Activated naive CD4-positive, alpha-beta T cell treated with anti-CD3 and anti-CD28 coated beads for 36 hours (primary cell): ENCODE measurements at regions of chr4 and their contacts with region 1.

Region 1: DNA sequence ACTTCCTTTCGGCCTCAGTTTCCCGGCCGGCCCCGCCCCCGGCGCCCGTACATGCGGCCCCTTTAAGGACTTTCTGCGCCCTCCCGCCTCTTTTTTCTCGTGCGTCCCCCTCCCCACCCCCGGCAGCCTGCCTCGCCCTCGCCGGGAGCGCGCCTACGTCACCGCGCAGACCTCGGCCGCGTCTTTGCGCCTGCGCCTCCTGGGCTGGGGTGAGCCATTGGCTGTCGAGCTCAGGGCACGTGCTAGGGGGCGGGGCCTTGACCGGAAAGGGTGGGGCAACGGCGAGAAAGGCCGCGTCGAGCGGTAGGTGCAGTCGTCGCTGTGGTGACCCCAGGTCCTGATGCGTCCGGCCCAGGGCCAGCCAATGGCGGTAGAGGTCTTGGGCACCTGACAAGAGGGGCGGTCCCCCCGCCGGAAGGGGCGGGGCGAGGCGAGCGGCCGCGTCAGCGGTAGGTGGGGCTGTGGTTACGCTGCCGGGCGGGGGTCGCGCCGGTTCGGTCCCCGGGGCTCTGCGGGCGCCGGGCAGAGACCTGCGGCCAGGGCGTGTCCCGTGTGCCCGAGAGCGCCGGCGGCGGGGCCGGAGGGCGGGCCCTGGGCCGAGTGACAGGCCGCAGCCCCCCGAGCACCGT is at the start of gene UVSSA:
- DNase-seq: peak; percentile 100
- H3K4me3 Mint-ChIP-seq: peak within 1 kb of the TSS; percentile 80
- H3K27ac Mint-ChIP-seq: peak within 1 kb of the TSS; percentile 78
- H3K4me1 Mint-ChIP-seq: peaks cover 46% of the 10 kb centered on the region
- H3K27me3 Mint-ChIP-seq: no peaks in the 10 kb centered on the region
- total RNA-seq, gene UVSSA: 20.0 to 24.3 TPM

Region 2: DNA sequence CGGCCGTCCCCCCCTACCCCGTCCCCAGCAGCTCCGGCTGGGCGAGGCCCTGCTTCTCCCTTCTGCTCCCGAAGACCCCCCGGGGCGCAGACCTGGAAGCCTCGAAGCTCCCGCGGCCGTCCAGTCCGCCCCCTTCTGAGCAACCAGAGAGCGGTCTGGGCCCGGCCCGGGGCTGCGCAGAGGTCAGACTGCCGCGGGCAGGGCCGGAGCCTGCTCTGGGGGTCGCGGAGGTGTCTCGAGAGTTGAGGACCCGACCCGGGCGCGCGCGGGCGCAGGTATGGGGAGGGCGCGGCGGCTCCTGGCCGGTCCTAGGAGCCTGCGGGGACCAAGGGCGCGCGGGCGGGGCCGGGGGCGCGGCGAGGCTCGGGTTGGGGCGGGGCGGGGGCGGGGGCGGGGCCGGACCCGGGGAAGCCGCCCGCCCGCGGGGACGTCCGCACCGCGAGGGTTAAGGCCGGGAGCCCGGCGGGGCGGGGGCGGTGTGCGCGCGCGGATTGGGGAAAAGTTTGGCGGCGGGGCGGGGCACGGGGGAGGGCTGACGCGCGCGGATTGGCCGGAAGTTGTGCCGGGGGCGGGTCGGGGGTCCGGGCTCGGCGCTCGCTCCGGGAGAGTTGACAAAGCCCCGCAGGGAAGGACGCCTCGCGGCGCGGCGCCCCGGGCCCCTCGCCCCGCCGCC is 335.7 kb before region 1 on chr4 and contains the start of gene FGFRL1:
- CTCF ChIA-PET with region 1: no interaction called
- intact Hi-C with region 1: loop called (anchors 1 kb)
- DNase-seq: peak; percentile 95
- H3K4me3 Mint-ChIP-seq: peak within 1 kb of the TSS; percentile 73
- H3K27ac Mint-ChIP-seq: peak within 1 kb of the TSS; percentile 46
- H3K4me1 Mint-ChIP-seq: peaks cover 11% of the 10 kb centered on the region
- H3K27me3 Mint-ChIP-seq: peaks cover 26% of the 10 kb centered on the region
- total RNA-seq, gene FGFRL1: 7.6 to 8.0 TPM

Region 3: DNA sequence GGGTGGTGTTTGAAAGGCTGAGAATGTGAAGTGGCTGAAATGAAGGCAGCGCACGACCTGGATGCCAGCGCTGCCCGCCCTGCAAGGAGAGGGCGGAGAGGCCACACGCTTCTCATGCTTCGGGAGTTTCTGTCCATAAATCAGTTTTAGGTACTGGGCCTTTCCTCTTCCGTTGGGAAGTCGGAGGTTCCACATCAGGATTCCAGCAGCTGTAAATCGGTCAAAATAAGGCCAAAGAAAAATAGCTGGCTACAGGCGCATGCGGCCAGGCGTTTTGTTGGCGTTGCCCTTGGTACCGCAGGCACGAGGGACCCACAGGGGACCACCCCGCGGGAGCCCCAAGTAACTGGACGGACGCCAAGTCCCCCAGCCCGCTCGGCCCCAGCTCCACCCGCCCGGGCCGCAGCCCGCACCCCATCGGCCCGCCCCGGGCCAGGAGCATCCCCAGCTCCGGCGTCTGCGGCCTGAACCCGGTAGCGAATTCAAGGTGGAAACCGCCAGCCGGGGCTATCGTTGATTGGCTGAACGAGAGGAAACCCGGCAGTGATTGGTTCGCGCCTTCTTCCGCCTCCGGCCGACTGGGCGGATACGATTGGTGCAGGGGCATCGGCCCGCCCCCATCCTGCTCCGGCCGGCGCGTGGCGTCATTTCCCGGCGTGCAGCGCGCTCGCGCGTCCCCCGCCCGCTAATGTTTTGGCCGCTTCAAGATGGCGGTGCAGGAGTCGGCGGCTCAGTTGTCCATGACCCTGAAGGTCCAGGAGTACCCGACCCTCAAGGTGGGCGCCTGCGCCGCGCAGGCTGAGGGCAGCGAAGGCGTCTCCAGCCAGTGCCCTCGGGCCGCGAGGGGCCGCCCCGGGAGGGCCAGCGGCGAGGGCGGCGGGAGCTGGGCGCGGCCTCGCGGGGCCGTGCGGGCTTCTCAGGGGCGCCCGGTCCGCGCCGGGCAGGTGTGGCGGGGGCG is 57.4 kb before region 1 on chr4 and contains the start of gene MAEA:
- CTCF ChIA-PET with region 1: interaction called, 3 read pairs
- intact Hi-C with region 1: loop called (anchors 1 kb)
- DNase-seq: peak; percentile 98
- H3K4me3 Mint-ChIP-seq: peak within 1 kb of the TSS; percentile 87
- H3K27ac Mint-ChIP-seq: peak within 1 kb of the TSS; percentile 82
- H3K4me1 Mint-ChIP-seq: peaks cover 40% of the 10 kb centered on the region
- H3K27me3 Mint-ChIP-seq: no peaks in the 10 kb centered on the region
- total RNA-seq, gene MAEA: 25.2 to 29.4 TPM

Region 4: DNA sequence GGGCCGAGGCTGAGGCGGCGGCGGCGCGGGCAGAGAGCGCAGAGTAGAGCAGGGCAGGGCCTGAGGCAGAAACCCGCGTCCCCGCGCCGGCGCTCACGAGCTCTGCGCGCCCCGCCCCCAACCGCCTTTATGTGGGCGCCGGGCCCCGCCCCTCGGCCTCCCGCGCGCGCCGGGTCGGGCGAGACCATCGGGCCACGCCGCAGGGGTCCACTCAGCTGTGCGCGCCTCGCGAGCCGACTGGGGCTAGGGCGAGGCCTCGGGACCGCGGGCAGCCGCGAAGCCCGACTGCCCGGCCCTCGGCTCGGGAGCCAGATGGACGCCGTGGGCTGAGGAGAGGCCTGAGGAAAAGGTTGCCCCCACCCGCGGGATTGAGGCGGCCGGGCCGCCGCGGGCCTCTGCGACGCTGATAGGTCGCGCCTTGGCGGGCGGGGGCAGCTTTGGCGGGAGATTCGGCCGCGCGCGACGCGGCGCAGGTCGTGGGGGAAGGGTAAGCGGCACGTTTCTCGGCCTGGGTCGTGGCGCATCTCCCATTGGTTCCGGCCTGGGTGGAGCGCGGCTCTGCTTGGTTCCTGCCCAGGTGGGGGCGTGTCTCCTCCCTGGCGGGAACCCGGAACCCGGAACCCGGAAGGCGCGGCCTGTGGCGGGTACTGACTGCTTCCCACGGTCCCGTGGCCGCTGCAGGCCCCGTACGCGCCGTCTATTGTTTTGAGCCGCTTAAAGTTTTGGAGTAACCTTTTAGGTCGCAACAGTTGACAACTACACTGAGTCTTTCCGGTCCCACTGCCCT is 365.5 kb after region 1 on chr4 and contains the start of gene SLBP:
- CTCF ChIA-PET with region 1: no interaction called
- intact Hi-C with region 1: loop called (anchors 2 kb)
- DNase-seq: peak; percentile 99
- H3K4me3 Mint-ChIP-seq: peak within 1 kb of the TSS; percentile 98
- H3K27ac Mint-ChIP-seq: peak within 1 kb of the TSS; percentile 94
- H3K4me1 Mint-ChIP-seq: peaks cover 68% of the 10 kb centered on the region
- H3K27me3 Mint-ChIP-seq: no peaks in the 10 kb centered on the region
- total RNA-seq, gene SLBP: 75.4 to 77.1 TPM

Region 5: GRCh38 chr4:1870578-1871443 is 523.9 kb after region 1 on chr4 and contains the start of gene NSD2:
- CTCF ChIA-PET with region 1: no interaction called
- intact Hi-C with region 1: loop called (anchors 10 kb)
- DNase-seq: peak; percentile 90
- H3K4me3 Mint-ChIP-seq: peak within 1 kb of the TSS; percentile 92
- H3K27ac Mint-ChIP-seq: peak within 1 kb of the TSS; percentile 96
- H3K4me1 Mint-ChIP-seq: peaks cover 35% of the 10 kb centered on the region
- H3K27me3 Mint-ChIP-seq: no peaks in the 10 kb centered on the region
- total RNA-seq, gene NSD2: 246 to 250 TPM

Region 6: GRCh38 chr4:2441393-2442174 is 1094.7 kb after region 1 on chr4:
- CTCF ChIA-PET with region 1: no interaction called
- intact Hi-C with region 1: no loop called
- DNase-seq: peak; percentile 86
- H3K4me3 Mint-ChIP-seq: no peak overlapping the region
- H3K27ac Mint-ChIP-seq: no peak overlapping the region
- H3K4me1 Mint-ChIP-seq: peaks cover 2% of the 10 kb centered on the region
- H3K27me3 Mint-ChIP-seq: no peaks in the 10 kb centered on the region